Dendritic cell treated with granulocyte-macrophage colony-stimulating factor and Interleukin-4, amounts not matched to agents 40 ng/mL and 50 ng/mL, for 4 days (primary cell): ENCODE measurements at regions of chr19 and their contacts with region 1.

Region 1: DNA sequence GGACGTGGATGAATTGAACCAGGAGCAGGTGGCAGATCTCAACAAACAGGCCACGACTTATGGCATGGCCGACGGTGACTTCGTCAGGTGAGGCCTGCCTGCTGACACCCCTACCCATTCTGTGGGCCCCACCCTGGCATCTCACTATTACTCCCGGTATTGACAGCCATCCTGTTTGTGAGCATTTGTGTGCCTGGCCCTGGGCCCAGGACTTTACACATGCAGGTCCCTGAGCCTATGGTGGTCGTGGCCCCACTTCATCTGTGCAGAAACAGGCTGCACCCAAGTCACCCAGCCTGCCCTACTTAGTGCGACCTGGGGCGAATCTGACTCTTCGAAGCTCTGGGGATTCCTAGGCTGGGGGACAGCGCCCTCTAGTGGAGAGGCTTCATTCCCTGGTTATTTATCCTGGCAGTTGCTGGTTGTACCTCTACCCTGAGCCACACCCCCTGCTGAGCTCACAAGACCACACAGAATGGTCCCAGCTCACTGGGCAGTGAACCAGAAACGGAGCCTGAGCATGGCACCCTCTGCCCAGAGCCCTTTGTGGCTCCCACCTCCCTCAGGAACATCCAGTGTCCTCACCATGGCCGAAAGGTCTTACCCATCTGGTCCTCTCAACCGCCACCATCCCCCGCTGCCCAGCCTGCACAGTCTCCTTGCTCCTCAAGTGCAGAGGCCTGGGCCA is 16.9 kb downstream of the ZNF296 start:
- H3K4me3 Mint-ChIP-seq: no peak overlapping the region
- H3K27ac Mint-ChIP-seq: peak overlapping the region; percentile 64
- H3K4me1 Mint-ChIP-seq: peaks cover 15% of the 10 kb centered on the region
- H3K27me3 Mint-ChIP-seq: no peaks in the 10 kb centered on the region

Region 2: DNA sequence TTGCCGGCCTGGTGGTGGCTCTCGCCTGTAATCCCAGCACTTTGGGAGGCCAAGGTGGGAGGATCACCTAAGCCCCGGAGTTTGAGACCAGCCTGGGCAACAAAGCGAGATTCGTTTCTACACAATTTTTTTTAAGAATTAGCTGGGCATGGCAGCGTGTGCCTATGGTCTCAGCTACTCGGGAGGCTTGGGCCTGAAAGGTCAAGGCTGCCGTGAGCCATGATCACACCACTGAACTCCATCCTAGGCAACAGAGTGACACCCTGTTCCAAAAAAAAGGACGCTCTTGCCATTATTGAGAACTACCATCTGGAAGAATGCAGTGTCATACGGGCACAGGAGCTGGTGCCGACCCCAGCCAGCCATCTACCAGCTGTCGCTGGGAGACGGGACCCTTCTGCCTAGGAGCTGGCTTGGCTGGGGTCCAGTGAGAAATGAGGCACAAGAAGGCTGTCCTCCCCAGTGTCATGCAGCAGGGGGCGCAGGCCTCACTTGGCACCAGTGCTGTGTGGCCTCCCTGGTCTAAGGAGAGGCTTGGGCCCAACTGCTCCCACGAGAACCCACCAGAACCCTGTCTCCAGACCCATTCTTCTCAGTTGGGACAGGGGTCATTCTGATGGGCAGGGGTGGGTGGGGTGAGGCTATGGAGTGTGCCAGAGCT is 70.4 kb before region 1 on chr19:
- intact Hi-C with region 1: loop called (anchors 1 kb)
- H3K4me3 Mint-ChIP-seq: no peak overlapping the region
- H3K27ac Mint-ChIP-seq: no peak overlapping the region
- H3K4me1 Mint-ChIP-seq: peaks cover 24% of the 10 kb centered on the region
- H3K27me3 Mint-ChIP-seq: no peaks in the 10 kb centered on the region

Region 3: GRCh38 chr19:45016388-45017319 is 42.8 kb before region 1 on chr19:
- intact Hi-C with region 1: loop called (anchors 1 kb)
- H3K4me3 Mint-ChIP-seq: no peak overlapping the region
- H3K27ac Mint-ChIP-seq: no peak overlapping the region
- H3K4me1 Mint-ChIP-seq: peaks cover 9% of the 10 kb centered on the region
- H3K27me3 Mint-ChIP-seq: no peaks in the 10 kb centered on the region

Region 4: GRCh38 chr19:45117669-45118068 is 58.2 kb after region 1 on chr19:
- intact Hi-C with region 1: no loop called
- H3K4me3 Mint-ChIP-seq: no peak overlapping the region
- H3K27ac Mint-ChIP-seq: peak overlapping the region; percentile 6
- H3K4me1 Mint-ChIP-seq: peaks cover 72% of the 10 kb centered on the region
- H3K27me3 Mint-ChIP-seq: peaks cover 8% of the 10 kb centered on the region